Activated B cell treated with CpG ODN at 0.5 μM for 24 hours (primary cell): ENCODE measurements at regions of chr7 and their contacts with region 1.

Region 1: DNA sequence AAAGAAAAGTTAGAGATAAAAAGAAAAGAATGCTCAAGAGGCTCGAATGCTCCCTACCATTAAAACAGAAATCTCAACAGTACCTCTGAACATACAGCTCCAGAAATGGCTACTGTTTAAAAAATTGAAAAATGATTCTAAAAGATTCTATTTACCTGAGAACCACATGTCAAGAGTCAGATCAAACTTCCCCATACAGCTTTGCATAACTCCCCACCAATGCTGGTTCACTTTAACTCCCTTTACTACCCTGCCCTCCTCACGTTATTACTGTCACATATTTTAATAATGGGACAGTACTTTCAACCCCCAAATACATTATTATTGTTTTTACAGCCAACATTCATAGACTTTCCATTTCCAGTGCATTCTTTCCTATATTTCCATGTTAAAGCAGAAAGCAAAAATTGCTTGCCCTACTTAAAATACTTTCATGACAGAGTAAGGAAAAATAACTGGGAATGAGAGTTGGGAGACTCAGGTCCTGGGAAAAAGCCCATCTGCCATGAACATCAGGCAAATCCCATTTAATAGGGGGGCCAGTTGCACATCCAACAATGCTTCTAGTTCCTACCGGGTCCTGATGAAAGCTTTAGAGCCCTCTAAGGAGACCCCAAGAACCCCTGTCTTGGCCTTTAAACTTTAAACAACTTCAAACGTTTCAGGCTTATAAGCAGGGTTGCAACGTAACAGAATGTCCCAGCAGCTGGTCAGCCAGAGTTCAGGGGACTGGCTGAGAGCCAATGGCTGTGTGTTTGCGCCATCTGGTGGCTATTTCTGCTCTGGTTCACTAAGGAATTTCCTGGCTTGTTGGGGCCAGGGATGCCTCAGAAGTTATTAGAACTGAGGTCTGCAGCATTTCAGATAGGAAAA is 247.4 kb downstream of the ELMO1 start:
- DNase-seq: no peak
- ATAC-seq: peak; percentile 37
- H3K4me3 Mint-ChIP-seq: no peak overlapping the region
- H3K27ac Mint-ChIP-seq: peak overlapping the region; percentile 59
- H3K4me1 Mint-ChIP-seq: peaks cover 19% of the 10 kb centered on the region
- H3K27me3 Mint-ChIP-seq: no peaks in the 10 kb centered on the region
- CTCF ChIP-seq: no peak

Region 2: GRCh38 chr7:36312344-36313334 is 888.6 kb before region 1 on chr7:
- CTCF ChIA-PET with region 1: no interaction called
- POLR2A ChIA-PET with region 1: no interaction called
- intact Hi-C with region 1: loop called (anchors 10 kb)
- DNase-seq: no peak
- ATAC-seq: peak; percentile 34
- H3K4me3 Mint-ChIP-seq: no peak overlapping the region
- H3K27ac Mint-ChIP-seq: no peak overlapping the region
- H3K4me1 Mint-ChIP-seq: peaks cover 2% of the 10 kb centered on the region
- H3K27me3 Mint-ChIP-seq: no peaks in the 10 kb centered on the region
- CTCF ChIP-seq: no peak

Region 3: GRCh38 chr7:36440880-36441279 is 760.4 kb before region 1 on chr7:
- CTCF ChIA-PET with region 1: interaction called, 18 read pairs
- POLR2A ChIA-PET with region 1: interaction called, 3 read pairs
- intact Hi-C with region 1: loop called (anchors 1 kb)
- DNase-seq: no peak
- ATAC-seq: no peak
- H3K4me3 Mint-ChIP-seq: no peak overlapping the region
- H3K27ac Mint-ChIP-seq: no peak overlapping the region
- H3K4me1 Mint-ChIP-seq: no peaks in the 10 kb centered on the region
- H3K27me3 Mint-ChIP-seq: no peaks in the 10 kb centered on the region
- CTCF ChIP-seq: no peak

Region 4: DNA sequence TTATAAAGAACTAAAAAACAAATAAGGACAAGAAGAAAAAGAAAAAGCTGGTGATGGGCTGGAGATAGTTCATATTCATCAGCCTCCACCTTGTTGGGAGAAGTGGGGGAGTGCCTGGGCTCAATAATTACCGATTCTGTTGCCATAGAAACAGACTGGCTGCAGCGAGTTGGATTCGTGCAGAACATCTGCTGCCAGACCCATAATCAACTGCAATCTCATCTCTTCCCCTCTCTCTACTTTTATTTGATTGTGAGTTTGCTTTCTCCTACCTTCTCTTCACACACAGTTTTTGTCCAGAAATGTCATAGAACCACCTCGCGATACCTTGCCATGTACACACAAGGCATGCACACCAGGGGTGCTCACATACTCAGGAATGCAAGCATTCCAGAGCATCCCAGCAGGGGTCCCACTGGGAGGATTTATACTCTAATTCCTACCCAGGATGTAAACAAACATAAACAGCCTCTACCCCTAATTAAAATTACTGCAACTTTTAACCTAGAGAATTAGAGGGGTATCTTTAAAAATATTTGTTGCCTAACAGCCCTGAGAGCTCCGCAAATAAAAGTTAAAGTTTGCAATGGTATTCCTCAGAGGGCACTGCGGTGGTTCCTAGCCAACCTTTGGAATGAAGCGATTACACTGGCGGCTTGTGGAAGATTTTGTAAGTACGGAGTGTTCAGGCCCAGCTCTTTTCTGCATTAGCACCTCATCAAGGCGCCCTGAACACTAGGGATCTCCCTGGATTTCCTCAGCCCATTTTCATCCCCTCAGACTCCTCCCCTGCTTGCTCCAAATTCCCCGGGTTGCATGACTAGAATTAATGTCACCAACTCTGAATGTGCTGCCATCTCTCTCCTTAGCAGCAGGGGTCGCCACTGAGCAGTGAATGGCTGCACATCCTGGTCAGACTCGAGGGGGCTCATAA is 214.5 kb before region 1 on chr7:
- CTCF ChIA-PET with region 1: interaction called, 3 read pairs
- POLR2A ChIA-PET with region 1: no interaction called
- intact Hi-C with region 1: loop called (anchors 1 kb)
- DNase-seq: peak; percentile 30
- ATAC-seq: peak; percentile 71
- H3K4me3 Mint-ChIP-seq: no peak overlapping the region
- H3K27ac Mint-ChIP-seq: no peak overlapping the region
- H3K4me1 Mint-ChIP-seq: peaks cover 33% of the 10 kb centered on the region
- H3K27me3 Mint-ChIP-seq: no peaks in the 10 kb centered on the region
- CTCF ChIP-seq: no peak